Panc1 (cell line): ENCODE measurements at regions of chr15 and their contacts with region 1.

Region 1: DNA sequence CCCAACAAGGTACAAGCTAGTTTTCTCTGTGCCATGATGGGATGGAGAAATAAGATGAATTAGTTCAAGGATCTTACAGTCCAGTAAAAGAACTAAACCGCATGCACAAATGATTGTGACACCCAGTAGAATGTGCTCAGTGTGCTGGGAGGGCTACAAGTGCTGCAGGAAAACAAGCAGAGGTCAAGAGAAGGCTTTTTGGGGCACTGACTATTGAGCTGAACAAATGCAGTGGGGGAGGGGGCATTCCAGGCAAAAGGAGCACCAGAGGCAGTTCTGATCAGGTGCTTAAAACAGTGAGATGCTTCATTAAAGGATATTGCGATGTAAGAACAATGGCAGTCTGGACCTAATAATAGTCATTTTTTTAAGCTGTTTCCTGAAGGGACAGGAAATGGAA is 6.0 kb downstream of the SLC27A2 start:
- DNase-seq: no peak
- ATAC-seq: no peak
- H3K4me3 ChIP-seq: no peak overlapping the region
- H3K27ac ChIP-seq: no peak overlapping the region
- H3K4me1 ChIP-seq: peaks cover under 1% of the 10 kb centered on the region; the same call in 1 of the 2 replicates
- H3K27me3 ChIP-seq: peaks cover 5% of the 10 kb centered on the region; the same call in 1 of the 2 replicates
- CTCF ChIP-seq: no peak

Region 2: DNA sequence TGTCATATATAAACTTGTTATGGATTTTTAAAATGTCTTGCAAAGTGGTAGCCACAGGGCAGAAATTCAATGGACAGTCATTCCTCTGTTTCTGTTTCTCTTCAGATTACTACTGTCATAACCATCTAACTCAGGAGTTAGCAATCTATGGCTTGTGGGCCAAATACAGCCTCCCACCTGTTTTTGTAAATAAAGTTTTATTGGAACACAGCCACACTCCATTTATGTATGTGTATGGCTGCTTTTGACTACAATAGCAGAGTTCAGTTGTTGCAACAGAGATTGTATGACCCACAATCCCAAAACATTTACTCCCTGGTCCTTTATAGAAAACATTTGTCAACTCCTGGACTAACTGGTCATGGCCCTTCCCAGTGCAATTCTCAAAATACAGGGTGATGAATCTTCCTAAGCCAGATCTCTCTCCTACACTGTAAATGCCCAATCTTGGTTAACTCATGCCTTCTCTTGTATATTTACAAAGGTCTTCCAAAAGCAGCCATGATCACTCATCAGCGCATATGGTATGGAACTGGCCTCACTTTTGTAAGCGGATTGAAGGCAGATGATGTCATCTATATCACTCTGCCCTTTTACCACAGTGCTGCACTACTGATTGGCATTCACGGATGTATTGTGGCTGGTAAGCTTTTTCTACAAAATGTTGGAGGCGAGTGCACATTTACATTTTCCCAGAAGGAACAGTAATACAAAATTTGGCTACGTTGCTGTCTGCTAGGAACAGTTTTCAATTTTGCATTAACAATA is 14.2 kb after region 1 on chr15:
- CTCF ChIA-PET with region 1: no interaction called
- POLR2A ChIA-PET with region 1: interaction called, 12 read pairs
- in situ Hi-C with region 1: no loop called
- intact Hi-C with region 1: no loop called
- DNase-seq: no peak
- ATAC-seq: no peak
- H3K4me3 ChIP-seq: no peak overlapping the region
- H3K27ac ChIP-seq: no peak overlapping the region
- H3K4me1 ChIP-seq: no peaks in the 10 kb centered on the region
- H3K27me3 ChIP-seq: no peaks in the 10 kb centered on the region; the same call in 1 of the 2 replicates
- CTCF ChIP-seq: no peak

Region 3: GRCh38 chr15:50259276-50259675 is 71.3 kb after region 1 on chr15:
- CTCF ChIA-PET with region 1: interaction called, 11 read pairs
- POLR2A ChIA-PET with region 1: no interaction called
- in situ Hi-C with region 1: no loop called
- intact Hi-C with region 1: no loop called
- DNase-seq: no peak
- ATAC-seq: peak; percentile 30; the same call in 1 of the 2 replicates
- H3K4me3 ChIP-seq: no peak overlapping the region
- H3K27ac ChIP-seq: no peak overlapping the region
- H3K4me1 ChIP-seq: no peaks in the 10 kb centered on the region
- H3K27me3 ChIP-seq: peaks cover 2% of the 10 kb centered on the region
- CTCF ChIP-seq: no peak

Region 4: DNA sequence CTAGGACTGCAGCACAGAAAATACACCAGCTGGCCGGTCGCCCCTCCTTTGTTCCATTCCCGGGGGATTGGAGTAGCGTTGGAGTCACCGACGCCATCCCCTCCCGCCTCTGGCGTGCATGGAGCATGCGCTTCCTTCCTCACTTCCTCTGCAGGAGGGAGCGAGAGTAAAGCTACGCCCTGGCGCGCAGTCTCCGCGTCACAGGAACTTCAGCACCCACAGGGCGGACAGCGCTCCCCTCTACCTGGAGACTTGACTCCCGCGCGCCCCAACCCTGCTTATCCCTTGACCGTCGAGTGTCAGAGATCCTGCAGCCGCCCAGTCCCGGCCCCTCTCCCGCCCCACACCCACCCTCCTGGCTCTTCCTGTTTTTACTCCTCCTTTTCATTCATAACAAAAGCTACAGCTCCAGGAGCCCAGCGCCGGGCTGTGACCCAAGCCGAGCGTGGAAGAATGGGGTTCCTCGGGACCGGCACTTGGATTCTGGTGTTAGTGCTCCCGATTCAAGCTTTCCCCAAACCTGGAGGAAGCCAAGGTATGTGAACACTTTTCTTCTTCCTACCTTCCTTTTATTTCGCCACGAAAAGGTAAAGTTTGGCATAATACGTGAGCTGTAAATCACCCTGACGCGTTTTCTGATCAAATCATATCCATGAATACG is 1493.4 kb after region 1 on chr15 and contains the start of gene SCG3:
- CTCF ChIA-PET with region 1: no interaction called
- POLR2A ChIA-PET with region 1: no interaction called
- in situ Hi-C with region 1: no loop called
- intact Hi-C with region 1: no loop called
- DNase-seq: no peak
- ATAC-seq: peak; percentile 92
- H3K4me3 ChIP-seq: peak within 1 kb of the TSS; percentile 16 to 30
- H3K27ac ChIP-seq: no peak within 1 kb of the TSS
- H3K4me1 ChIP-seq: no peaks in the 10 kb centered on the region
- H3K27me3 ChIP-seq: peaks cover 55% of the 10 kb centered on the region
- CTCF ChIP-seq: no peak
- total RNA-seq, gene SCG3: 0.62 TPM